CD8-positive, alpha-beta T cell (primary cell): ENCODE measurements at regions of chr3 and their contacts with region 1.

Region 1: GRCh38 chr3:36893137-36893557 is 51.7 kb downstream of the TRANK1 start:
- DNase-seq: peak in 4 of 9 experiments; percentile 26 to 84 (median 70)
- ATAC-seq: peak; percentile 95
- H3K4me3 ChIP-seq: no peak overlapping the region
- H3K4me3 Mint-ChIP-seq: peak overlapping the region; percentile 26
- H3K27ac ChIP-seq: peak overlapping the region; percentile 28 to 68
- H3K27ac Mint-ChIP-seq: peak overlapping the region; percentile 92
- H3K4me1 ChIP-seq: peaks cover 41% of the 10 kb centered on the region
- H3K4me1 Mint-ChIP-seq: peaks cover 55% of the 10 kb centered on the region
- H3K27me3 ChIP-seq: no peaks in the 10 kb centered on the region
- H3K27me3 Mint-ChIP-seq: no peaks in the 10 kb centered on the region
- CTCF ChIP-seq: no peak

Region 2: DNA sequence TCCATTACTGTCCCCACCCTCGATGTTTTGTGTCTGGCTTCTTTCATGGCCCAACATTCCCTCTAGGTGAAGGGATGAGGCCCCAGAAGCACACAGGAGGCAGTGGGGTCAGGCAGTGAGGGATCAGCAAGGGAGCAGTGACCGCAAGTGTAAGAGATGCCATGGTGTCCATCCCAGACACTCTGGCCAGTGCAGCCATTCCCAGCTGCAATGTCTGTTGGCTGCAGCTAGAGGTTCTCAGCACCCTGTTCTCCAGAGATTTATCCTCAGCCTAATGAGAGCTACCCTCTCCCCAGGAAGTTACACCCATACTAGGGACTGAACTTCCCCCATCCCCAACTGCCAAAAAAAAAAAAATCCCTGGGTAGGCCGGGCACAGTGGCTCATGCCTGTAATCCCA is 11.5 kb after region 1 on chr3:
- CTCF ChIA-PET with region 1: interaction called, 7 read pairs
- POLR2A ChIA-PET with region 1: interaction called, 17 read pairs
- intact Hi-C with region 1: loop called in 1 of 2 experiments (anchors 2 kb)
- DNase-seq: no peak
- ATAC-seq: no peak
- H3K4me3 ChIP-seq: no peak overlapping the region
- H3K4me3 Mint-ChIP-seq: no peak overlapping the region
- H3K27ac ChIP-seq: peak overlapping the region in 1 of 2 experiments; percentile 8
- H3K27ac Mint-ChIP-seq: peak overlapping the region; percentile 62
- H3K4me1 ChIP-seq: peaks cover 63% of the 10 kb centered on the region
- H3K4me1 Mint-ChIP-seq: peaks cover 84% of the 10 kb centered on the region
- H3K27me3 ChIP-seq: no peaks in the 10 kb centered on the region
- H3K27me3 Mint-ChIP-seq: no peaks in the 10 kb centered on the region
- CTCF ChIP-seq: no peak

Region 3: GRCh38 chr3:36993326-36994283 is 100.5 kb after region 1 on chr3 and contains the start of gene MLH1:
- CTCF ChIA-PET with region 1: no interaction called
- POLR2A ChIA-PET with region 1: interaction called, 5 read pairs
- intact Hi-C with region 1: loop called in 1 of 2 experiments (anchors 5 kb)
- DNase-seq: peak in 8 of 9 experiments; percentile 95 to 100 (median 97)
- ATAC-seq: peak; percentile 81
- H3K4me3 ChIP-seq: peak within 1 kb of the TSS; percentile 58 to 77
- H3K4me3 Mint-ChIP-seq: no peak within 1 kb of the TSS
- H3K27ac ChIP-seq: peak within 1 kb of the TSS; percentile 89 to 99
- H3K27ac Mint-ChIP-seq: no peak within 1 kb of the TSS
- H3K4me1 ChIP-seq: peaks cover 44% of the 10 kb centered on the region
- H3K4me1 Mint-ChIP-seq: peaks cover 35% of the 10 kb centered on the region
- H3K27me3 ChIP-seq: no peaks in the 10 kb centered on the region
- H3K27me3 Mint-ChIP-seq: no peaks in the 10 kb centered on the region
- CTCF ChIP-seq: no peak
- total RNA-seq, gene MLH1: 21.4 to 23.9 TPM